ENCODE measurements at regions of chr13 and their contacts with region 1.

Region 1: GRCh38 chr13:73039181-73040108 is 19.4 kb upstream of the KLF5 start:
- DNase-seq: no peak
- H3K4me3 ChIP-seq: no peak overlapping the region
- H3K27ac ChIP-seq: no peak overlapping the region
- H3K4me1 ChIP-seq: peaks cover 19% of the 10 kb centered on the region; the same call in 1 of the 2 replicates
- H3K27me3 ChIP-seq: no peaks in the 10 kb centered on the region
- CTCF ChIP-seq: no peak

Region 2: GRCh38 chr13:72788831-72789230 is 250.6 kb before region 1 on chr13:
- CTCF ChIA-PET with region 1: interaction called, 21 read pairs
- POLR2A ChIA-PET with region 1: no interaction called
- intact Hi-C with region 1: no loop called
- DNase-seq: no peak
- H3K4me3 ChIP-seq: no peak overlapping the region
- H3K27ac ChIP-seq: no peak overlapping the region
- H3K4me1 ChIP-seq: no peaks in the 10 kb centered on the region; the same call in 1 of the 2 replicates
- H3K27me3 ChIP-seq: no peaks in the 10 kb centered on the region
- CTCF ChIP-seq: no peak

Region 3: DNA sequence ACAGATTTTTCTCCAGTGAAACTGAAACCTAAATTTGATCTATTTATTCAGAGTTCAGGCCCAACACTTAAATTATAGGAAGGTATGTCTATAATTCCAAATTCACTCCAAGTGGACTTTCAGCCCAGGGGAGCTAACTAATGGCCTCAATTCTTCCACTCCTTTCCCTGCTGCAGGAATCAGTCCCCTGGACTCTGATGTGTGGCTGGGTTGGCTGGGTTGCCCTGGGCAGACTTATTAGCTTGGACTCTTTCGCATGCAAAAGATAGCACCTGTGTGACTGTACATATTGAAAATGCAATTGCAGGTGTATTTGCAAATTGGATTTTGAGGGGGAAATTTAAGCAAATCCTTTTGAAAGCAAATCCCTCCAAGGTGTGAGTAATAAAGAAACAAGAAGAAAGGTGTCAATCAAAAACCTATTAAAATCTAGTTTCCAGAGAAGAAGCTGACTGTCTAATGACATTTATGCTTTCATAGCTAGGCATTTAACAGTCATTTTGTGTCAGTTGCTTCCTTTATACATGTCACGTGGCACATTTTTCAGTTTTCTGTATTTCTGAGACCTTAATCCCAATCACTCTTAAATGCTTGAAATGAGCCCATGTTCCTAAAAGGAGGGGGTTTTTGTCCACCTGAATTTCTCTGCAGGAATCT is 62.0 kb after region 1 on chr13:
- CTCF ChIA-PET with region 1: no interaction called
- POLR2A ChIA-PET with region 1: no interaction called
- intact Hi-C with region 1: no loop called
- DNase-seq: no peak
- H3K4me3 ChIP-seq: no peak overlapping the region
- H3K27ac ChIP-seq: no peak overlapping the region
- H3K4me1 ChIP-seq: peaks cover 30% of the 10 kb centered on the region
- H3K27me3 ChIP-seq: no peaks in the 10 kb centered on the region
- CTCF ChIP-seq: no peak

Region 4: GRCh38 chr13:73672492-73672891 is 633.0 kb after region 1 on chr13:
- CTCF ChIA-PET with region 1: no interaction called
- POLR2A ChIA-PET with region 1: interaction called, 10 read pairs
- intact Hi-C with region 1: no loop called
- DNase-seq: no peak
- H3K4me3 ChIP-seq: no peak overlapping the region
- H3K27ac ChIP-seq: no peak overlapping the region
- H3K4me1 ChIP-seq: no peaks in the 10 kb centered on the region
- H3K27me3 ChIP-seq: no peaks in the 10 kb centered on the region
- CTCF ChIP-seq: no peak

Measured in PC-9 (cell line).